ENCODE measurements at regions of chr9 and their contacts with region 1.

Region 1: DNA sequence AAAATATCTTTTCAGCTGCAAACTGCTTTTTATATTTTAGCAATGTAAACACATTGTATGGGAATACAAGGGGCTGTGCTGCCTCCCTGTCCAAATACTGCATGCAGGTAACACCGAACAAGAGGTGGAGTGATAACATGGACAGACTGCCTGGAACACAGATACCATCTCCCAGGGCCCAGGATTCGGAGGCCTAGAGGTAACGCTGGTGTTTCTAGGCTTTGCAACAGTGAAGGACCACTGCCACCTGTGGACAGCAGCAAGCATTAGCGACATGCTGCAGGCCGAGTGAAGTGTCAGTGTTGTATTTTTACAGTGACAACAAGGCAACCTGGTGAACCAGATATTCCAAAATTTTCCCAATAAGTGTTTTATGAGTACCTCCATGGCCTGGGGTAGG is 379.1 kb downstream of the DMRT2 start:
- DNase-seq: no peak
- H3K4me3 ChIP-seq: no peak overlapping the region
- H3K27ac ChIP-seq: no peak overlapping the region
- H3K4me1 ChIP-seq: no peaks in the 10 kb centered on the region
- H3K27me3 ChIP-seq: no peaks in the 10 kb centered on the region
- CTCF ChIP-seq: no peak

Region 2: DNA sequence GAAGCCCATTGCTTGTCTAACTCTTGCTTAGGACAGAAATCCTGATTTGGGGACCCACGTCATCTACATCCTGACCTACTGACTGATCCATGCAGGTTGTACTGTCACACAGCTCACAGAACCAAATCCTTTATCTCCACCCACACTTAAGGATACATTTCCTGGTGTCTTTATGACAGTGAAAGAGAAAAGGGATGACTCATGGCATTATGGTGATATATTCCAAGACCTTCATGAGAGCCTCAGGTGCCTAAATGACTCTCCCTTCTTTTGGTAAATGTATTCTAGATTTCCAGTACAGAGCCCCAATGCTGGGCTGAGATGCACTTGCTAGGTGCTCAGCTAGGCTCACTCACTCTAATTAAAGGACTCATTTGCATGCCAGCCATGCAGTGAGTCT is 405.2 kb before region 1 on chr9:
- intact Hi-C with region 1: loop called (anchors 5 kb)
- DNase-seq: no peak
- H3K4me3 ChIP-seq: no peak overlapping the region
- H3K27ac ChIP-seq: no peak overlapping the region
- H3K4me1 ChIP-seq: no peaks in the 10 kb centered on the region
- H3K27me3 ChIP-seq: no peaks in the 10 kb centered on the region
- CTCF ChIP-seq: no peak

Region 3: GRCh38 chr9:1100945-1101344 is 328.4 kb before region 1 on chr9:
- intact Hi-C with region 1: loop called (anchors 5 kb)
- DNase-seq: peak; percentile 56
- H3K4me3 ChIP-seq: no peak overlapping the region
- H3K27ac ChIP-seq: no peak overlapping the region
- H3K4me1 ChIP-seq: no peaks in the 10 kb centered on the region
- H3K27me3 ChIP-seq: no peaks in the 10 kb centered on the region
- CTCF ChIP-seq: peak; percentile 47

Region 4: GRCh38 chr9:1198089-1198488 is 231.2 kb before region 1 on chr9:
- intact Hi-C with region 1: no loop called
- DNase-seq: no peak
- H3K4me3 ChIP-seq: no peak overlapping the region
- H3K27ac ChIP-seq: no peak overlapping the region
- H3K4me1 ChIP-seq: no peaks in the 10 kb centered on the region
- H3K27me3 ChIP-seq: no peaks in the 10 kb centered on the region
- CTCF ChIP-seq: no peak

Measured in colonic mucosa (tissue), 4 donors.